ENCODE measurements at regions of chr9 and their contacts with region 1.

Region 1: DNA sequence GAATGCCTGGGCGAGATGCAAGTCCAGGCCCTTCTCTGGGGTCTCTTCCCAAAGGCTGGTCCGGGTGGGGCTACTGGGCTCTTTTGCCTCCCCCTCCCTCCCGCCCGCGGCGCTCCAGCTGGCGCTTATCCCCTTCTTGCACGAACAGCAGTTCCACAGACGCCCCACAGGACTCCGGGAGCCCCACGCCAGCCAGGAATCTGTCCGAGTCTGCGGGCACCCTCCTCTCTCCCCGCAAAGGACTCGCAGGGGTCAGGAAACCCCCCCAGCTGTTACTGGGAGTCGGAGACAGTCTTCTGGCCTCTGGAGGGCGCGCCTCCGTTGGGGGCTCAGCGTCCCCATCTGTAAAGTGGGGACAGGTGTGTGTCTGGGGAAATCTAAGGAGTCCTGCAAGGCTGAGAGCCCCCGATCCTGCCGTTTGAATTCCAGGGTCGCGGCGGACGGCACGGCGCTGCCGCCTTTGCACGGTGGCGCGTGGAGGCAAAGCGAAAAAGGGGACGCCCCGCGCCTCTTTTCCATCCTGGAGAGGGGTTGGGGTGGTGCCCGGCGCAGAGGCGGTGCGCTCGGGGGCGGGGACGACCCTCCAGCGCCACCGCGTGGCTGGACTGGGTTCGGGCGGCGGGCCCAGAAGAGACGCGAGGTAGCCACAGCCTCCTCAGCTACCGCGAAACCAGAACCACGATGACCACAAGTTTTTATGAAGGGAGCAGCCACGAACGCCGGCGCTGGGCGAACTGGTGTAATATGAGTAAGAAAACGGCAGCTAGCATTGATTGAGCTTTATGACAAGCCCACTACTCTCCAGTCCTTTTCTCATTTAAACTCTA is 2.9 kb upstream of the CCIN start:
- H3K4me3 Mint-ChIP-seq: peak overlapping the region; percentile 74
- H3K27ac Mint-ChIP-seq: peak overlapping the region; percentile 55
- H3K4me1 Mint-ChIP-seq: peaks cover 48% of the 10 kb centered on the region
- H3K27me3 Mint-ChIP-seq: peaks cover 35% of the 10 kb centered on the region

Region 2: GRCh38 chr9:36136272-36136893 is 29.9 kb before region 1 on chr9 and contains the start of gene GLIPR2:
- intact Hi-C with region 1: loop called (anchors 2 kb)
- H3K4me3 Mint-ChIP-seq: peak within 1 kb of the TSS; percentile 98
- H3K27ac Mint-ChIP-seq: peak within 1 kb of the TSS; percentile 93
- H3K4me1 Mint-ChIP-seq: peaks cover 60% of the 10 kb centered on the region
- H3K27me3 Mint-ChIP-seq: peaks cover 3% of the 10 kb centered on the region